ENCODE measurements at regions of chr18 and their contacts with region 1.

Region 1: DNA sequence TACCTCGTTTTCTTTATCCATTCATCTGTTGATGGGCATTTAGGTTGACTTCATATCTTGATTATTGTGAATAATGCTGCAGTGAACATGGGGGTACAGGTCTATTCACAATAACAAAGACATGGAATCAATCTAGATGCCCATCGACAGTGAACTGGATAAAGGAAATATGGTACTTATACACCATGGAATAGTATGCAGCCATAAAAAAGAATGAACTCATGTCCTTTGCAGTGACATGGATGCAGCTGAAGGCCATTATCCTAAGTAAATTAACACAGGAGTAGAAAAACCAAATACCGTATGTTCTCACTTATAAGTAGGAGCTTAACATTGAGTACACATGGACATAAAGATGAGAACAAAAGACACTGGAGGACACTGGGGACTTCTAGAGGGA is 111.6 kb downstream of the LAMA3 start:
- DNase-seq: no peak
- ATAC-seq: no peak
- H3K4me3 ChIP-seq: no peak overlapping the region
- H3K27ac ChIP-seq: no peak overlapping the region
- H3K4me1 ChIP-seq: no peaks in the 10 kb centered on the region
- H3K27me3 ChIP-seq: 0 out of 2 replicates have a peak, but pooled peaks cover 2% of the 10 kb centered on the region
- CTCF ChIP-seq: no peak

Region 2: DNA sequence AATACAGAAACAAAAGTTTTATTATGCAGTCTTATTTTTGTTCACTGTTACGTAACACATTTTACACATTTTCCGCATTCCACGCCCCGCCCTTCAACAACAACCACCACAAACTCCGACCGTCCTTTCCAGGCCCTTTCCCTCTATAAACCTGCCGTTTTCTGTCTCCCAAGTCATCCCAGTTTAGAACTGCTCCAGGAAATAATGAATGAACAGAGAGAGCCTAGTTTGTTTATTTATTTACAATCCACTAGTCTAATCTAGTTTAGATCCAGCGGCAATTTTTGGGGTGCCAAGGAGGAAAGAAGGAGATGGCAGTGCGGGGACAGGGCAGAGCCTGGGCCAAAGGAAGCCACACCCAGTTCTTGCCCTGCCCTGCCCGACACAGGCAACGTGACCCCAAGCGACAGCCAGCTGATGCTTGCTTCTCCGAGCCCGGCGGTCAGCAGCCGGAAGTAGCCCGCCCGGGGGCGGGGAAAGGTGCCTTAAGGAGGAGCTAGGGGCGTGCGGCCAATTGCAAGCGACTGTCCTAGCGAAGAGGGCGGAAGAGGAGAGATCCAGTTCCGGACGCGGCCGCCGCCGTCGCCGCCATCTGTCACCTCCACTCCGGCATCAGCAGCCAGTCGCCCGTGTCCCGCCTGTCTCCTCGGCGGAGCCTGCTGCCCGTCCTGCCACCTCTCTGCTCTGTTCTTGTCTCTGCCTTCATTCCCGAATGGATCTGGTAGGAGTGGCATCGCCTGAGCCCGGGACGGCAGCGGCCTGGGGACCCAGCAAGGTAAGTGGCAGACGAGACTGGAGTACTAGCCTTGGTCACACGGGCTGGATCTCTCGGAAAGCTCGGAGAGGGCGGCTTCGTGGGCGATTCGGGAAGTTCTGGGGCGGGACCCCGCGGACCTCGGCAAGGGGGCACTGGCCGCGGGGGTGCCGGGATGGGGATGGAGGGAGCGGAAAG is 347.9 kb before region 1 on chr18 and contains the start of gene RIOK3:
- CTCF ChIA-PET with region 1: no interaction called
- POLR2A ChIA-PET with region 1: no interaction called
- in situ Hi-C with region 1: no loop called
- intact Hi-C with region 1: no loop called
- DNase-seq: peak; percentile 80
- ATAC-seq: peak; percentile 99
- H3K4me3 ChIP-seq: peak within 1 kb of the TSS; percentile 96 to 97
- H3K27ac ChIP-seq: peak within 1 kb of the TSS; percentile 96
- H3K4me1 ChIP-seq: peaks cover 22% of the 10 kb centered on the region
- H3K27me3 ChIP-seq: no peaks in the 10 kb centered on the region
- CTCF ChIP-seq: no peak
- total RNA-seq, gene RIOK3: 74.7 TPM

Region 3: GRCh38 chr18:24103320-24104021 is 302.6 kb after region 1 on chr18:
- CTCF ChIA-PET with region 1: no interaction called
- POLR2A ChIA-PET with region 1: interaction called, 12 read pairs
- in situ Hi-C with region 1: no loop called
- intact Hi-C with region 1: no loop called
- DNase-seq: no peak
- ATAC-seq: no peak
- H3K4me3 ChIP-seq: no peak overlapping the region
- H3K27ac ChIP-seq: no peak overlapping the region
- H3K4me1 ChIP-seq: no peaks in the 10 kb centered on the region
- H3K27me3 ChIP-seq: no peaks in the 10 kb centered on the region
- CTCF ChIP-seq: no peak

Measured in Panc1 (cell line).